Activated CD4-positive, alpha-beta memory T cell treated with anti-CD3 and anti-CD28 coated beads for 36 hours (primary cell): ENCODE measurements at regions of chr3 and their contacts with region 1.

Region 1: DNA sequence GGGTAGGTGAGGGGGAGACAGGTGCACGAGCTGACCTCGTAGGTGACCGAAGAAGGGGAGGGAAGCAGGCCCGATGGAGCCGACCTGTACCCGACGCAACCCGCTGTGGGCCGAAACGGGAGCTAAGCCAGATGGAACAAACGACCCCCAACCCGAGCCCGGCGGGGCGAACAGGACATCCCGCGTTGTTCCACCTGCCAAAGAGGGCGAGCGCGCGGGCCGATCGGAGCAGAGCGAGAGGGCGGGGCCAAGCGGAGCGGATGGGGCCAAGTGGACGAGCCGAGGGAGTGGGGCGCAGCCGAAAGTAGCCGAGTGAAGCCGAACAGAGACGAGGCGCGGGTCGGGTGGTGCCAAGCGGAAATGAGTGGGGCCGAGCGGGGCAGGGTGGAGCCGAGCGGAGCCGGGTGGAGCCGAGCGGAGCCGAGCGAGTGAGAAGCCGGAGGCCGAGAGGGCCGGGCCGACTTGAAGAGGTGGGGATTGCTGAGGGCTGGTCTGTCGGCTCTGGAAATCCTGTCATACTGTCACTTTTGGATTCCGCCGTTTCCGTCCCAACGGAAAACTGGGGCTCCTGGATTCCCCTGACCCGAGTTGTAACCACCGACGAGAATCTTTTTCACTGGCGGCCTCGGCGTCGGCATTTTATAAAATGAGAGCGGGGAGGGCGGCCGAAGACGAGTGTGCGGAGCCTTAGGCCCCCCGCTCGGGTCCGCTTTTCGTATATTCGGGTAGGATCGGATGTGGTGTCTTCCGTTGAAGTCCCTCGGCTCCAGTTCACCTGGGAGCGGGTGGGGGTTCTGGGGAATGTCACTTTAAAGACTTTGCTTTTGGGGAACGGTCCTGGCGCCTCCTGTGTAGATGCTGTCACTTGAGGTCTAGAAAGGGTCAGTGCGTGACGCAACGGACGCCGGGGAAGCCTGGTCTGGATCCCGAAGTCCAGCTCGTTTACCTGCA is 15.6 kb upstream of the WNT7A start:
- DNase-seq: peak; percentile 98
- H3K4me3 Mint-ChIP-seq: peak overlapping the region; percentile 84
- H3K27ac Mint-ChIP-seq: peak overlapping the region; percentile 67
- H3K4me1 Mint-ChIP-seq: peaks cover 28% of the 10 kb centered on the region
- H3K27me3 Mint-ChIP-seq: no peaks in the 10 kb centered on the region

Region 2: GRCh38 chr3:13648060-13649001 is 247.1 kb before region 1 on chr3:
- CTCF ChIA-PET with region 1: interaction called, 567 read pairs
- POLR2A ChIA-PET with region 1: no interaction called
- intact Hi-C with region 1: no loop called
- DNase-seq: peak; percentile 84
- H3K4me3 Mint-ChIP-seq: peak overlapping the region; percentile 18
- H3K27ac Mint-ChIP-seq: peak overlapping the region; percentile 14
- H3K4me1 Mint-ChIP-seq: peaks cover 23% of the 10 kb centered on the region
- H3K27me3 Mint-ChIP-seq: peaks cover 8% of the 10 kb centered on the region

Region 3: DNA sequence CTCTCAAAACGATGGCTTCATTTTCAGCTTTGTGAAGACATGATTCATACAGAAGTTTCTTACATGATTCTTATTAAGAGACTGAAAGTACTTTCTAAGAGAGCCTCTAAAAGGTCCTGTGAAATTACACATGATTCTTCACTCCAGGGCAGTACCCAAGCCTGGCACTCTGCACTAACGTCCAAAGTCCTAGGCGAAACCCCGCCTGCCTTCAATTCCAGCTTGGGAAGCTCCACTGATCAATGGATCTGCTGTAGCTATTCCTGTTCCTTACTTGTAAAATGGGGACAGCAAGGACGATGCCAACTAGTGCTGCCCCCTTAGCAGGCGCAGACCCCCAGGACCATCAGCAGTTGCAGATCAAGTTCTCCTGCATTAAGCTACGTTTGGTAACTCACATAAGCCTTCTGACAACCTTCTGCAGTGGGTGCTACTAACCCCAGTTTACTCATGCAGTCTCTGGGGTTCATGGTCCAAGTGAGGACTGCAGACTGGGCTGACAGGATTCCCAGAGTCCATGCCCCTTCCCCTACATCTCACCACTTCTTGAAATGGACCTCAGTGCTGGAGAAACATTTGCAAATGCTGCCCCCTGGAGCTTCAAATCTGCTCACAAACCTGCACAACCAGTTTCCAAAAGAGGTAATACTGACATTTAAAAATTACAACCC is 218.7 kb after region 1 on chr3:
- CTCF ChIA-PET with region 1: interaction called, 29 read pairs
- POLR2A ChIA-PET with region 1: no interaction called
- intact Hi-C with region 1: loop called (anchors 1 kb)
- DNase-seq: no peak
- H3K4me3 Mint-ChIP-seq: no peak overlapping the region
- H3K27ac Mint-ChIP-seq: no peak overlapping the region
- H3K4me1 Mint-ChIP-seq: no peaks in the 10 kb centered on the region
- H3K27me3 Mint-ChIP-seq: no peaks in the 10 kb centered on the region

Region 4: GRCh38 chr3:14178247-14179113 is 283.1 kb after region 1 on chr3 and contains the starts of genes LSM3 and XPC:
- CTCF ChIA-PET with region 1: interaction called, 15 read pairs
- POLR2A ChIA-PET with region 1: interaction called, 9 read pairs
- intact Hi-C with region 1: loop called (anchors 2 kb)
- DNase-seq: peak; percentile 98
- H3K4me3 Mint-ChIP-seq: peak within 1 kb of the TSS; percentile 87
- H3K27ac Mint-ChIP-seq: peak within 1 kb of the TSS; percentile 89
- H3K4me1 Mint-ChIP-seq: peaks cover 63% of the 10 kb centered on the region
- H3K27me3 Mint-ChIP-seq: no peaks in the 10 kb centered on the region
- total RNA-seq, gene LSM3: 22.1 to 22.9 TPM
- total RNA-seq, gene XPC: 27.8 to 31.6 TPM

Region 5: GRCh38 chr3:14261229-14261628 is 365.8 kb after region 1 on chr3:
- CTCF ChIA-PET with region 1: interaction called, 4 read pairs
- POLR2A ChIA-PET with region 1: no interaction called
- intact Hi-C with region 1: loop called (anchors 1 kb)
- DNase-seq: peak; percentile 83
- H3K4me3 Mint-ChIP-seq: no peak overlapping the region
- H3K27ac Mint-ChIP-seq: no peak overlapping the region
- H3K4me1 Mint-ChIP-seq: no peaks in the 10 kb centered on the region
- H3K27me3 Mint-ChIP-seq: peaks cover 16% of the 10 kb centered on the region

Region 6: DNA sequence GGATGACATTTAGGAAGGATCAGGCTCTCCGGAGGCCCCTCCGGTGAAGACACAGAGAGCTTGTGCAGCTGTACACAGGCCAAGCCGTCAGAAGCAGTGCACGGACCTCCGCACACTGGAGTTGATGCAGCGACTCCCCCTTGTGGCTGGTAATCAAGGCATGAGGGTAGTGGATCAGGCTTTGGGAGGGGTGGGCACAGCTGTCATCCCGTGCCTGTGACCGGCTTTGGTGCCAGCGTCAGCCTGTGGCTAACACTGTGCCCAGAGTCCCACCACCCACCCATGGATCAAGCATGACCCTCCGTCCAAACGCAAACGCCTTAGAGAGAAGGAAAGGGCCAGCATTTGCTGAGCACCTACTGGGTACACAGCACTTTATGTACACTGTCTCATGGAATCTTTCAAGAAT is 652.9 kb after region 1 on chr3:
- CTCF ChIA-PET with region 1: no interaction called
- POLR2A ChIA-PET with region 1: no interaction called
- intact Hi-C with region 1: loop called (anchors 5 kb)
- DNase-seq: peak; percentile 50
- H3K4me3 Mint-ChIP-seq: no peak overlapping the region
- H3K27ac Mint-ChIP-seq: no peak overlapping the region
- H3K4me1 Mint-ChIP-seq: no peaks in the 10 kb centered on the region
- H3K27me3 Mint-ChIP-seq: peaks cover 26% of the 10 kb centered on the region

Region 7: GRCh38 chr3:14921078-14921616 is 1025.7 kb after region 1 on chr3:
- CTCF ChIA-PET with region 1: interaction called, 5 read pairs
- POLR2A ChIA-PET with region 1: no interaction called
- intact Hi-C with region 1: loop called (anchors 10 kb)
- DNase-seq: peak; percentile 88
- H3K4me3 Mint-ChIP-seq: no peak overlapping the region
- H3K27ac Mint-ChIP-seq: no peak overlapping the region
- H3K4me1 Mint-ChIP-seq: no peaks in the 10 kb centered on the region
- H3K27me3 Mint-ChIP-seq: no peaks in the 10 kb centered on the region